Activated naive CD4-positive, alpha-beta T cell treated with anti-CD3 and anti-CD28 coated beads, Interleukin-2, amount 10 ng/mL, durations not matched to agents 7 days and 5 days (primary cell): ENCODE measurements at regions of chr15 and their contacts with region 1.

Region 1: DNA sequence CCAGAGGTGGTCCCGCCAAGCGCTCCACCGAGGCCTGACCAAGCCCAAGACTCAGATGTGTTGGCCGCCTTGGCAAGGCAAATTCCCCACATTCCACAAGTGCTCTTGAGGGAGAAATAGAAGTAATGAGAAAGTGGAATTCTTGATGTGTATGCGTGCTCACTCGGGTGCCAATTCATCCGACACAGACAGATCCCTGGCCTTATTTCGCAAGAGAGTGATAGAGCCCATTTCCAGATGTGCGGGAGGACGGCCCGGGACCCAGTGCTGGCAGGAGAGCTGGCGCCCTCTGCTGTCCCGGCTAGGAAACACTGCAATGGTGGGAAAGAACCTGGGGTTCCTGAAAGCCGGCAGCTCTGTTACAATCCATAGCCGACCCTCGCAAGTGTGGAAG is 76.0 kb downstream of the HMG20A start:
- DNase-seq: peak; percentile 81
- H3K4me3 Mint-ChIP-seq: no peak overlapping the region
- H3K27ac Mint-ChIP-seq: no peak overlapping the region
- H3K4me1 Mint-ChIP-seq: peaks cover 9% of the 10 kb centered on the region
- H3K27me3 Mint-ChIP-seq: no peaks in the 10 kb centered on the region

Region 2: DNA sequence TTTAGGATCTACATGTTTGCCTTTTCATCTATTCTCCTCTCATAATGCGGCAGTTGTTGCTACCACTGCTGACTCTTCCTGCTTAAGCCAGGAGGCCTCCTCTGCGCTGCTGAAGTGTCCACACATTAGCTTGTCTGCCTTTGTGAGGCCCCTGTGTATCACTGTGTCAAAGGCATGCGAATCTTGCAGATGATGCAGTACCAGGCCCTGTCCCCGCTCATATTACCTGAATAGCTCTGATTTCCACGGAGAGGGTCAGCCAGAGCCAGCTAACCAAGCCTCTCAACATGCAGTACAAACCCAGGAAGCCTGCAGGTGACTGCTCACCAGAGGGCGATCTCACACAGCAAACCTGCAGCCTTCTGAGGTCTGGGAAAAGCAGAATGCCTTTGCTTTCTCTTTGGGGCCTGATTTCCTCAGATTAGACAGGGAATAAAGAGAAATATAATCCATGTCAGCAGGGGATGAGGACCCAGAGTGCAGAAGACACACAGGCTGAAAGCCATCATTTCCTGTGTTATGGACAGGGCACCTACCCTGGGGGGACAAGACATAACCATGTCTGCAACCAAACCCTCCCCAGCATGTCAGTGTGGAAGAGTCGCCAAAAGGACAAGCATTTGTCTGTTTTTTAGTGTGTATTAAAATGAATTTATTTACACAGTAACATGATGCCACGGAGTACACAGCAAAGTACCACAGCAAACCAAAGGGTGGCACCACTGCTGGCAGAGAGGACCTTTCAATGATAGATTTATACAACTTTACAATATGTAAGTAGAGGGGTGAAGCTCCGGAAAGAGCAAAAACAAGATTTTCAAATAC is 389.0 kb before region 1 on chr15:
- CTCF ChIA-PET with region 1: interaction called, 10 read pairs
- DNase-seq: peak; percentile 65
- H3K4me3 Mint-ChIP-seq: no peak overlapping the region
- H3K27ac Mint-ChIP-seq: no peak overlapping the region
- H3K4me1 Mint-ChIP-seq: no peaks in the 10 kb centered on the region
- H3K27me3 Mint-ChIP-seq: peaks cover 5% of the 10 kb centered on the region

Region 3: GRCh38 chr15:77118882-77119321 is 377.8 kb before region 1 on chr15:
- CTCF ChIA-PET with region 1: interaction called, 17 read pairs
- DNase-seq: peak; percentile 59
- H3K4me3 Mint-ChIP-seq: no peak overlapping the region
- H3K27ac Mint-ChIP-seq: no peak overlapping the region
- H3K4me1 Mint-ChIP-seq: peaks cover 6% of the 10 kb centered on the region
- H3K27me3 Mint-ChIP-seq: no peaks in the 10 kb centered on the region

Region 4: DNA sequence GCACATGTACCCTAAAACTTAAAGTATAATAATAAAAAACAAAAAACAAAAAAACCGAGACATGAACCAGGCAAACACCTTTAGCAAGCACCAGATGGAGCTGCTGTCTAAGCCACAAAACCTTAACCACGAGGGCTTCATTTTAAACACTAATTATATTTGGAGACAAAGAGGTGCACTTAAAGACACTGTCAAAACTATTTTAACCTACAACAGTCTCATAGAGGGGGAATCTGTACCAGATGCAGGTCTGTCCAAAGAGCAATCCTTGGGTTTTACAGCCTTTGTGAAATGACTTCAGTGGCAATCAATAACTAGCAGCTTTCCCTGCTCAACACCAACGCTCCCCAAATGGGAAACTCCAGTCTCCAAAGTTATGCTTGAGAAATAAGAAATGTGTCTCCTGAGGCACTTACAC is 310.1 kb before region 1 on chr15:
- CTCF ChIA-PET with region 1: interaction called, 151 read pairs
- DNase-seq: peak; percentile 29
- H3K4me3 Mint-ChIP-seq: no peak overlapping the region
- H3K27ac Mint-ChIP-seq: no peak overlapping the region
- H3K4me1 Mint-ChIP-seq: peaks cover 46% of the 10 kb centered on the region
- H3K27me3 Mint-ChIP-seq: no peaks in the 10 kb centered on the region

Region 5: DNA sequence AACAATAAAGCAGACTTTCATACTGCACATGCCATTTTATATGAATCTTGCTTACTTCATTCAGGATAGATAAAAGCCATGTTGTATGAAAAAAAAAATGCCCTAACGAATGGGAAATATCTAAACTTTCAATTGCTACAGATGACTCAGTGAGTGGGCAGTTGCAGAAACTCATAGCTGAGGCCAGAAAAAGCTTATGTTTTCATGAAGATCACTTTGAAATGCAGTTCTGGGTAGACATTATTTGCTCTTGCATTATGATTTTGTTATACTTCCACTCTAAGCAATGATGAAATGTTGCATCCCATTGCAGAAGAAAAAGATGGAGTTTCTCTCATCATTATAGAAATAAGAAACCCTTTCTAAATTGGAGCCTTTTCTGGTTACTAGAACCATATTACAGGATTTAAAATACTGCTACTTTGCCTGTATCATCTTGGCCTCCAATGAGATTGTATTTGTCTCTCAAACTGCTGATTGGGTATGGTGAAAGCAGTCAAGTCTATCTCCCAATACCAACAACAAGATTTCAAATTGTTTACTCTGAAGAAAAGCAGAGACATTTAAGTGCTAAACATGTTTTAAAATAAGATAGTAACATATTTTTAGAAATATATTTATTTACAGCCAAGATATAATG is 93.8 kb before region 1 on chr15:
- CTCF ChIA-PET with region 1: no interaction called
- DNase-seq: no peak
- H3K4me3 Mint-ChIP-seq: no peak overlapping the region
- H3K27ac Mint-ChIP-seq: no peak overlapping the region
- H3K4me1 Mint-ChIP-seq: peaks cover 19% of the 10 kb centered on the region
- H3K27me3 Mint-ChIP-seq: no peaks in the 10 kb centered on the region

Region 6: DNA sequence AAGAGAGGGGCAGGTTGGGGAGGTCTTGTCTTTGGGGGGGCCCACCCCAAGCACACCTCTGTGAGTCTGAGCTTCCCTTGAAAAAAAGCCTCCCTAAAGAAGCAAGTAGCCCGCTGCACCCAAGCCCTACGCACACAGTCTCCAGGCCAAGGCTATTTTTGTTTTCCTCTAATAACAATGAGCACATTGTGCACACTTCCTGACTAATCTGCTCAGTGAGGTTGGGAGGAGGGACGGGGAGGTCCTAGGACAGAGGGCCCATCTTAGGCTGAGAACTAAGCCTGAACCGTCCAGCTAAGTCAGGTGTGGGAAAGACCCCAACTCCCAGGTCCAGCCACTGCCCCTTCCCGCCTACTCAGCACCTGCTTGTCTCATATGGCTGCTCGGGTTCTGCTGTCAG is 11.2 kb after region 1 on chr15:
- CTCF ChIA-PET with region 1: interaction called, 12 read pairs
- DNase-seq: no peak
- H3K4me3 Mint-ChIP-seq: no peak overlapping the region
- H3K27ac Mint-ChIP-seq: no peak overlapping the region
- H3K4me1 Mint-ChIP-seq: peaks cover 12% of the 10 kb centered on the region
- H3K27me3 Mint-ChIP-seq: no peaks in the 10 kb centered on the region